ENCODE measurements at regions of chr2 and their contacts with region 1.

Region 1: GRCh38 chr2:101361121-101361870 is 26.0 kb downstream of the CREG2 start:
- DNase-seq: no peak
- H3K4me3 ChIP-seq: no peak overlapping the region
- H3K27me3 ChIP-seq: peaks cover 13% of the 10 kb centered on the region
- CTCF ChIP-seq: no peak

Region 2: GRCh38 chr2:101349893-101350662 is 11.2 kb before region 1 on chr2:
- CTCF ChIA-PET with region 1: interaction called, 11 read pairs
- POLR2A ChIA-PET with region 1: no interaction called
- DNase-seq: no peak
- H3K4me3 ChIP-seq: no peak overlapping the region
- H3K27me3 ChIP-seq: no peaks in the 10 kb centered on the region; the same call in 1 of the 2 replicates
- CTCF ChIP-seq: peak; percentile 42

Region 3: GRCh38 chr2:101410716-101411211 is 49.5 kb after region 1 on chr2:
- CTCF ChIA-PET with region 1: no interaction called
- POLR2A ChIA-PET with region 1: no interaction called
- DNase-seq: no peak
- H3K4me3 ChIP-seq: no peak overlapping the region
- H3K27me3 ChIP-seq: no peaks in the 10 kb centered on the region
- CTCF ChIP-seq: no peak

Region 4: DNA sequence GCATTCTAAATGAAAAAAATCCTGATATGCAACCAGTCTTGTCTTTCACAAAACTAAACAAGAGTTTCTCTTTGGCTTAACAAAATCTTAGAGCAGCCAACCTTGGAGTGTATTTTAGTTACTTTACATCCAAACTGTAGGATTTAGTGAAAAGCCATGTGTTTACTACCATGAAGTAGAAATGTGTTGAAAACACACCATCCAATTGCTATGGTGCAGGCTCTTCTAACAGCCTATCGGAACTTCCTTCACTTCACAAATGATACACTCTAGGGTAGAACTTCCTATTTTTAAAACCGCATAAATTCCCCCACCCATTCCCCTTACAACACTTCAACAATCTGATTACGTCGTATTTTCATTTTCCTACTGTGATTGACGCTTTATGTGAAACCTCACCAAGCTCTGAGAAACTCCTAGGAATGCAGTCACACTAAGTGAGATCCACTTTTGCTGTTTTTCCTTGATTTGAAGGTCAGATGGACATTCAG is 261.8 kb after region 1 on chr2:
- CTCF ChIA-PET with region 1: no interaction called
- POLR2A ChIA-PET with region 1: no interaction called
- DNase-seq: no peak
- H3K4me3 ChIP-seq: no peak overlapping the region
- H3K27me3 ChIP-seq: peaks cover 4% of the 10 kb centered on the region; the same call in 1 of the 2 replicates
- CTCF ChIP-seq: no peak

Region 5: GRCh38 chr2:101883863-101884262 is 522.6 kb after region 1 on chr2:
- CTCF ChIA-PET with region 1: no interaction called
- POLR2A ChIA-PET with region 1: no interaction called
- DNase-seq: no peak
- H3K4me3 ChIP-seq: no peak overlapping the region
- H3K27me3 ChIP-seq: no peaks in the 10 kb centered on the region
- CTCF ChIP-seq: peak; percentile 63

Region 6: DNA sequence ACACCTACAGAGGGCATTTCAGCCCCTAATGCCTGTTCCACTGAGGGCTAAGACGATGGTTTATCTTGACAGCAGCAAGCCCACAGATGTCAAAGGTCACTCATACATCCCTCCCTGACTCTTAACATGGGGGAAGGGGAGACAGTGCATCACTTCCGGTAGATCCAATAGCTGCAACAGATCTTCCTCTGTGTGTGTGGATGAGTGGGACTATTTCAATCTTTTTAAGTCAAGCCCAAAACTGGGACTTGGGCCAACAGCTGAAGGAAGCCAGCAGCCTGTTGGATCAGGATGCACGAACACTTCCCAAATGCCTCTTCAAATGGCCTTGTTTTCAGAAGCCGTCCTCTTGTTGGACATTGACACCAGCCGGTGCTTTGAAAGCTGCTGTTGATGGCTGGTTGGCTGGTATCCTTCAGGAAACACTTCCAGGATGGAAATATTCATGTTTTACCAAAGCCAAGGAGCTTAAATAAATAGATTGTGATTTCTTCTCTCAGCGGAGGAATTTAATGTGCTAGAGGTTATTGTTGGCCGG is 689.6 kb after region 1 on chr2:
- CTCF ChIA-PET with region 1: no interaction called
- POLR2A ChIA-PET with region 1: no interaction called
- DNase-seq: no peak
- H3K4me3 ChIP-seq: no peak overlapping the region
- H3K27me3 ChIP-seq: no peaks in the 10 kb centered on the region
- CTCF ChIP-seq: no peak

Measured in BJ (cell line).